Mammary epithelial cell (primary cell): ENCODE measurements at regions of chr1 and their contacts with region 1.

Region 1: GRCh38 chr1:204806943-204807687 is 63.5 kb upstream of the NFASC start:
- DNase-seq: peak; percentile 63
- H3K4me3 ChIP-seq: peak overlapping the region; percentile 37 to 59 (median 39)
- H3K27ac ChIP-seq: no peak overlapping the region
- H3K4me1 ChIP-seq: no peaks in the 10 kb centered on the region
- H3K27me3 ChIP-seq: no peaks in the 10 kb centered on the region
- CTCF ChIP-seq: peak; percentile 82 to 96

Region 2: DNA sequence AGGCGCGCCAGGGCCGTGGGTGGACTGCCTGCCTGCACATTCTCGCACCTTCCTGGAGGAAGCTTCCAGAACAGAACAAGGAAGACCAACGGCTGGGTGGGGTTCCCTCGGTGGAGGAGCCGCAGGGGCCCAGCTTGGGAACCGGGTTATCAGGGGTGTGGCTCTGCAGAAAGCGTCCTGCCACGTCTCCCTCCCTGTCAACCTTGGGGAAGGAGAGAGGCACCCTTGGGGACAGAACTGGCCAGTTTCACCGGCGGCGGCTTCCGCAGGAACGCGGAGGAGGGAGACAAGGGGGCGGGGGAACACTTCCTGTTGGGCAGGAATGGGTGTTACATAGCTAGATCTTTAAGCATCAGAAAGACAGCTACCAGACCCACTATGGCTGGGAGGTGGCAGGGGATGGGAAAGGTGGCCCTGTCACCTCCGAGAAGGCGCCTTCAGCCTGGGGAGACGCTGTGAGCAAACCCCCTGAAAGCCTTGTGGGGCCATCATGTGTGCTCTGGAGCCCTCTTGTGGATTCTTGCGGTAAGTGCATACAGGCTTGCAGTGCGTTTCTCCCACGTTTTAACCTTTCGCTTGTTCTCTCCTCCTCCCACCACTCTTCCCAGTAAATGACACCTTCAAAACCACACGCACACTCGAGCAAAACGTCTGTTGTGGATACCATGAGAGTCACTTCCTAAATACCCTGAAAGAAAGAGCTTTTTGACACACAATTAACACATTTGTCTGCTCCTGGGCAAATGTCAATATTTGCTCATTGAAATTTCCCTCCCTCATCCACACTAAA is 443.6 kb before region 1 on chr1:
- CTCF ChIA-PET with region 1: no interaction called
- dilution Hi-C with region 1: no loop called
- in situ Hi-C with region 1: no loop called
- intact Hi-C with region 1: no loop called
- DNase-seq: peak; percentile 59
- H3K4me3 ChIP-seq: peak overlapping the region; percentile 36 to 53 (median 41)
- H3K27ac ChIP-seq: peak overlapping the region; percentile 6
- H3K4me1 ChIP-seq: peaks cover 7% of the 10 kb centered on the region
- H3K27me3 ChIP-seq: no peaks in the 10 kb centered on the region
- CTCF ChIP-seq: peak; percentile 96 to 98

Region 3: DNA sequence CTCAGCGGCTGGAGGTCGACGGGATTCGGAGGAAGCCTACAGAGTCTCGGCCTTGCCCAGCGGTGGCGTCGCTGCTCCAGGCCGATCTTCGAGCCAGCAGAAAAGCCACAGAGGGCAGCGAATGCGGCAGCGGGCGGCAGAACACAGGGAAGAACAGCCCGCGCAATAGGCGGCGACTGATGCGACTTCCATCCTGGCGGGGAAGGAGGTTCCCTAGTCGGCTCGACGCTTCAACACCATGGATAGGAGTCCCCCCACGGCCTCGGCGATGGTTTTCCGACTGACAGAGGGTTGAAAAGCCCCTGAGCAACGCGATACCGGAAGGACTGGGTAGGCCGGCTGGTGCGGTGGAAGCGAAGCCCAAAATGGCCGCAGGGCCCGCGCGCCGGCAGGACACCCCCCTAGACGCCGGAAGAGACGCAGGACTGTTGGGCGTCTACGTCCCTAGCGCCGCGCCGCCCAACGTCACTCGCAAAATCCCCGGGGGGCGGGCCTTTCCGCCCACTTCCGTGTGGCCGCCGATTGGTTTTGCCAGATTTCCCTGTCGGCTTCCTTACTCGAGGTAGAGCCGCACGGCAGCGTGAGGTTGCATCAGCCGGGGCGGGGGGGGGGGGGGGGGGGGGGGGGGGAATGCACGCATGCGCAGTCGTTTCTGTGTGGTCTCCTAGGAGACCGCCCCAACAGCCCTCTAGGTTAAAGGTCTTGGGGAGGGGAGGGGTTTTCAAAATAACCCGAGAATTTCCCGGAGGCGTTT is 395.5 kb before region 1 on chr1 and contains the start of gene PPP1R15B:
- CTCF ChIA-PET with region 1: no interaction called
- dilution Hi-C with region 1: no loop called
- in situ Hi-C with region 1: no loop called
- intact Hi-C with region 1: loop called (anchors 10 kb)
- DNase-seq: peak; percentile 99
- H3K4me3 ChIP-seq: peak within 1 kb of the TSS; percentile 64 to 99 (median 85)
- H3K27ac ChIP-seq: peak within 1 kb of the TSS; percentile 99
- H3K4me1 ChIP-seq: peaks cover 13% of the 10 kb centered on the region
- H3K27me3 ChIP-seq: no peaks in the 10 kb centered on the region
- CTCF ChIP-seq: no peak
- total RNA-seq, gene PPP1R15B: 33.4 to 37.5 TPM

Region 4: GRCh38 chr1:204565617-204566582 is 241.2 kb before region 1 on chr1:
- CTCF ChIA-PET with region 1: interaction called, 16 read pairs
- dilution Hi-C with region 1: loop called (anchors 5 kb)
- in situ Hi-C with region 1: loop called (anchors 10 kb)
- intact Hi-C with region 1: loop called (anchors 1 kb)
- DNase-seq: peak; percentile 71
- H3K4me3 ChIP-seq: no peak overlapping the region
- H3K27ac ChIP-seq: no peak overlapping the region
- H3K4me1 ChIP-seq: peaks cover 8% of the 10 kb centered on the region
- H3K27me3 ChIP-seq: no peaks in the 10 kb centered on the region
- CTCF ChIP-seq: peak; percentile 52 to 73

Region 5: GRCh38 chr1:204633665-204634064 is 173.4 kb before region 1 on chr1:
- CTCF ChIA-PET with region 1: no interaction called
- dilution Hi-C with region 1: no loop called
- in situ Hi-C with region 1: no loop called
- intact Hi-C with region 1: no loop called
- DNase-seq: no peak
- H3K4me3 ChIP-seq: no peak overlapping the region
- H3K27ac ChIP-seq: no peak overlapping the region
- H3K4me1 ChIP-seq: no peaks in the 10 kb centered on the region
- H3K27me3 ChIP-seq: peaks cover 7% of the 10 kb centered on the region
- CTCF ChIP-seq: no peak

Region 6: GRCh38 chr1:204763706-204764427 is 43.2 kb before region 1 on chr1:
- CTCF ChIA-PET with region 1: interaction called, 4 read pairs
- dilution Hi-C with region 1: no loop called
- in situ Hi-C with region 1: no loop called
- intact Hi-C with region 1: loop called (anchors 2 kb)
- DNase-seq: peak; percentile 67
- H3K4me3 ChIP-seq: no peak overlapping the region
- H3K27ac ChIP-seq: no peak overlapping the region
- H3K4me1 ChIP-seq: no peaks in the 10 kb centered on the region
- H3K27me3 ChIP-seq: no peaks in the 10 kb centered on the region
- CTCF ChIP-seq: peak; percentile 69 to 93

Region 7: GRCh38 chr1:204828338-204828850 is 21.3 kb after region 1 on chr1:
- CTCF ChIA-PET with region 1: no interaction called
- dilution Hi-C with region 1: no loop called
- in situ Hi-C with region 1: no loop called
- intact Hi-C with region 1: loop called (anchors 1 kb)
- DNase-seq: peak; percentile 72
- H3K4me3 ChIP-seq: peak overlapping the region; percentile 23 to 62 (median 42)
- H3K27ac ChIP-seq: no peak overlapping the region
- H3K4me1 ChIP-seq: peaks cover 3% of the 10 kb centered on the region
- H3K27me3 ChIP-seq: peaks cover 2% of the 10 kb centered on the region
- CTCF ChIP-seq: peak in 1 of 2 donors; percentile 8

Region 8: GRCh38 chr1:204941421-204942338 is 134.6 kb after region 1 on chr1:
- CTCF ChIA-PET with region 1: interaction called, 6 read pairs
- dilution Hi-C with region 1: no loop called
- in situ Hi-C with region 1: loop called in 1 of 2 experiments (anchors 5 kb)
- intact Hi-C with region 1: loop called (anchors 1 kb)
- DNase-seq: peak; percentile 37
- H3K4me3 ChIP-seq: no peak overlapping the region
- H3K27ac ChIP-seq: no peak overlapping the region
- H3K4me1 ChIP-seq: peaks cover 14% of the 10 kb centered on the region
- H3K27me3 ChIP-seq: no peaks in the 10 kb centered on the region
- CTCF ChIP-seq: peak; percentile 98

Region 9: DNA sequence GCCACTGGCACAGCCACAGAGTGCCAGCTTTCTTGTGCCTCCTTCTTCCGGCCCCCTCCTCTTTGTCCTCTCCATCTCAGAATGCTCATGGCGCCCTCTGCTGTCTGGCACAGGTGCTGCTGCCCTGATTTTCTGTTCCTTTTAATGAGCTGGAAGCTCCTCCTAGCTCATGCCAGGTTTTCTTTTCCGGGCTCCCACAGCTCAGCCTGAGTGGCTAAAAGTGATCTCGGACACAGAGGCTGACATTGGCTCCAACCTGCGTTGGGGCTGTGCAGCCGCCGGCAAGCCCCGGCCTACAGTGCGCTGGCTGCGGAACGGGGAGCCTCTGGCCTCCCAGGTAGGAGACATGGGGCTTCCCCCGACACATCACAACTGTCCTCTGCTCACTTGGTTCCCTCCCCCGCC is 254.6 kb after region 1 on chr1:
- CTCF ChIA-PET with region 1: interaction called, 5 read pairs
- dilution Hi-C with region 1: no loop called
- in situ Hi-C with region 1: no loop called
- intact Hi-C with region 1: loop called (anchors 1 kb)
- DNase-seq: peak; percentile 48
- H3K4me3 ChIP-seq: no peak overlapping the region
- H3K27ac ChIP-seq: no peak overlapping the region
- H3K4me1 ChIP-seq: no peaks in the 10 kb centered on the region
- H3K27me3 ChIP-seq: no peaks in the 10 kb centered on the region
- CTCF ChIP-seq: peak; percentile 92 to 93